PC-3 (cell line): ENCODE measurements at regions of chr4 and their contacts with region 1.

Region 1: DNA sequence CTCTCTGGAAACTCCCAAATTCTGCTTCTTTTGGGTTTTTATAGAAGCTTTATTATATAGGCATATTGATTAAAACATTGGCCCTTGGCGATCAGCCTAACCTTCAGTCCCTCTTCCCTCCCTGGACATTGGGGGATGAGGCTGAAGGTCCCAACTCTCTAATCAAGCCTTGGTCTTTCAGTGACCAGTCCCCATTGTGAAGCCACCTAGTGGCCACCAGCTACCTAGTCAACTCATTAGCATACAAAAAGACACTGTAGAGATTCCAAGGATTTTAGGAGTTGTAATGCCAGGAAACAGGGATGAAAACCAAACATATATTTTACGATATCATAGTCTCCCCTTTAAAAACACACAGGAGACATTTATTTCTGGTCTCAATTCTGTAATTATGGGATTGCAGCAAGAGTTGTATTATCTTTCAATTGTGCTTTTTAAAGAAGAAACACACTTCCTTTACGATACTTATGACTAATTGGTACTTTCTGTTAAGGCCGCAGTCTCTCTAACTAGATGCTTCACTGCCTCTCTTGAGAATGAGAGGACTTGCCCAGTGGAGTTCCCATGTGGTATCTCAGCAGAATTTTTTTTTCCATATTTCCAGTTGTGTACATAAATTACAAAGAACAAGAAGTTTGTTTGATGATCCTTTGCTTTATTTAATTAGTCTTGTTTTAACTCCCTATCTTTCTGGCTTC is 58.2 kb downstream of the WDR17 start:
- DNase-seq: peak; percentile 43
- ATAC-seq: peak; percentile 76
- H3K4me3 ChIP-seq: peak overlapping the region; percentile 41
- H3K27ac ChIP-seq: no peak overlapping the region
- H3K4me1 ChIP-seq: no peaks in the 10 kb centered on the region
- H3K27me3 ChIP-seq: no peaks in the 10 kb centered on the region
- CTCF ChIP-seq: peak; percentile 80

Region 2: GRCh38 chr4:175944126-175944910 is 179.5 kb before region 1 on chr4:
- CTCF ChIA-PET with region 1: no interaction called
- POLR2A ChIA-PET with region 1: no interaction called
- intact Hi-C with region 1: no loop called
- DNase-seq: no peak
- ATAC-seq: no peak
- H3K4me3 ChIP-seq: no peak overlapping the region
- H3K27ac ChIP-seq: no peak overlapping the region
- H3K4me1 ChIP-seq: no peaks in the 10 kb centered on the region
- H3K27me3 ChIP-seq: no peaks in the 10 kb centered on the region
- CTCF ChIP-seq: no peak

Region 3: GRCh38 chr4:176034499-176034898 is 89.4 kb before region 1 on chr4:
- CTCF ChIA-PET with region 1: no interaction called
- POLR2A ChIA-PET with region 1: no interaction called
- intact Hi-C with region 1: loop called (anchors 5 kb)
- DNase-seq: peak; percentile 51
- ATAC-seq: no peak
- H3K4me3 ChIP-seq: no peak overlapping the region
- H3K27ac ChIP-seq: no peak overlapping the region
- H3K4me1 ChIP-seq: no peaks in the 10 kb centered on the region
- H3K27me3 ChIP-seq: no peaks in the 10 kb centered on the region
- CTCF ChIP-seq: peak; percentile 58

Region 4: DNA sequence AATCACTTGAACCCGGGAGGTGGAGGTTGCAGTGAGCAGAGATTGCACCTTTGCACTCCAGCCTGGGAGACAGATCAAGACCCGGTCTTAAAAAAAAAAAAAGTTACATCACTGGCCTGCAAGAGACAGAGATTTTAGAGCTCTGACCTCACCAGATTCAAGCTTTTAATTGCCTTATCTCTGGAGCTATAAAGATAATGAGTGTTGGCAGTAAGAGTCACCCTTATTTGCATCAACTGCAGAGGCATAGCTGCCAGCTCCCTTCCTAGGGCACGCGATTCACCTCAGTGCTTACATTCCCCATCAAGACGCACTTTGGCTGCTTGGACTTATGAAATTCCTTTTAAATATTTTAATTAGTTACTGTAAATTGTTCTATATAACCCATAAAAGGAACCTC is 84.0 kb after region 1 on chr4:
- CTCF ChIA-PET with region 1: no interaction called
- POLR2A ChIA-PET with region 1: no interaction called
- intact Hi-C with region 1: no loop called
- DNase-seq: no peak
- ATAC-seq: no peak
- H3K4me3 ChIP-seq: no peak overlapping the region
- H3K27ac ChIP-seq: no peak overlapping the region
- H3K4me1 ChIP-seq: no peaks in the 10 kb centered on the region
- H3K27me3 ChIP-seq: no peaks in the 10 kb centered on the region
- CTCF ChIP-seq: no peak